GM12878 (cell line): ENCODE measurements at regions of chr1 and their contacts with region 1.

Region 1: DNA sequence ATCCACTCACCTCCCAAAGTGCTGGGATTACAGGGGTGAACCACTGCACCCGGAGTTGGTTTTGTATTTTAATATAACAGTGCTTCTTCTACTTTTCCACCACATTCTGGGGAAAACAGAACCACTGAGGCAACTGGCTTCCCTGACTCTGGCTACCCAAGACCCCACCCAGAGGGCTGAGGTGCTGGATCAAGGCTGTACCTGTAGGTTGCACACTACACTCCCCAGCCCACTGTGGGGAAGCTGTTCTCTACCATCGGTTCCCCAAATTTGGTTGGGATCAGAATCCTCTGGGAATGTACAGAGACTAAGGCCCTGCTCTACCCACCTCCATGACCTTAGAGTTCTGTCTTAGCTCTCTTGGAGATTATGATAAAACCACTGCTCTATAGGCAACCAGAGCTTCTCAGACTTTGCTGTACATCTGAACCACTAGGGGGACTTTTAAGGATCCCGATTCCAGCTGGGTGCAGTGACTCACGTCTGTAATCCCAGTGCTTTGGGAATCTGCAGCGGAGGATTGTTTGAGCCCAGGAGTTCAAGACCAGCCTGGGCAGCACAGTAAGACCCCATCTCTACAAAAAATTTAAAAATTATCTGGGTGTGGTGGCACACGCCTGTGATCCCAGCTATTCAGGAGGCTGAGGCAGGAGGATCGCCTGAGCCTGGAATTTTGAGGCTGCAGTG is 51.6 kb downstream of the GNG4 start:
- DNase-seq: no peak
- ATAC-seq: peak; percentile 42; the same call in 2 of the 3 replicates
- H3K4me3 ChIP-seq: no peak overlapping the region
- H3K27ac ChIP-seq: no peak overlapping the region
- H3K4me1 ChIP-seq: no peaks in the 10 kb centered on the region
- H3K27me3 ChIP-seq: no peaks in the 10 kb centered on the region
- CTCF ChIP-seq: peak; percentile 13 to 41 (median 35); a peak in 5 of 6 replicates
- EP300 ChIP-seq: no peak
- POLR2A ChIP-seq: no peak
- RAD21 ChIP-seq: no peak

Region 2: GRCh38 chr1:235404195-235404594 is 193.8 kb before region 1 on chr1:
- CTCF ChIA-PET with region 1: no interaction called
- POLR2A ChIA-PET with region 1: no interaction called
- RAD21 ChIA-PET with region 1: no interaction called
- SMC1A ChIA-PET with region 1: no interaction called
- in situ Hi-C with region 1: no loop called
- intact Hi-C with region 1: no loop called
- DNase-seq: no peak
- ATAC-seq: no peak
- H3K4me3 ChIP-seq: no peak overlapping the region
- H3K27ac ChIP-seq: no peak overlapping the region
- H3K4me1 ChIP-seq: no peaks in the 10 kb centered on the region
- H3K27me3 ChIP-seq: no peaks in the 10 kb centered on the region
- CTCF ChIP-seq: no peak
- EP300 ChIP-seq: no peak
- POLR2A ChIP-seq: no peak
- RAD21 ChIP-seq: no peak

Region 3: DNA sequence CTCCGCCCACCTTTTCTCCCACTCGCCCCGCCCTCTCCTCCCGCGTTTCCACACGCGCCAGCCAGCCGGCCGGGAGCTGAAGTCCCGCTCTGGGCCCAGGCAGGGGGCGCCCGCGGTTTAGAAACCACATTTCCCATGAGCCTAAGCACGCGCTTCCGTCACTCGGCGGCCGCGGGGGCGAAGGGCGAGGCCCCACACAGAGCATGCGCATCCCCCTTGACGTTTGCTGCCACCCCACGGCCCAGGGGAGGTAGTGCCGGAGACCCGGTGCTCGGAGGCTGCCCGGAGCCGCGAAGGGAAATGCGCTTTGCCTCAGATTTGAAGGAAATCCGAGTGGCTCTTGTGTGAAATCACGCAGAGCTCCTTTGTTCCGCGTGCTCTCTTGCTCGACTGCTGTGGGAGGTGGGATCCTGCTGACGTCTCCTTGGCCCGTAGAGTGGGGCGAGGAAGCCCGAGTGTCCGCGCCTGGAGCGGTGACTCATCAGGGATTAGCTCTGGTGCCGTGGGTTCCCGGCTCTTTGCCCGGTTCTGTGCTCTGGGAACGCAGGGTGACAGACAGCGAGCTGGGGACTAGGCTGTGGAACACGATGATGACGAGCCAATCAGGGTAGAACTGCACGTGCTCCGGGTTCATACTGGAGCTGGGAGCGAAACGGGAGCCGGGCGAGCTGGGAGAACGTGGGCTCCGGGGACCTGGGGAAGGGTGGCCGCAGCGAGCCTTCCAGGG is 93.4 kb before region 1 on chr1:
- CTCF ChIA-PET with region 1: interaction called, 11 read pairs
- POLR2A ChIA-PET with region 1: no interaction called
- RAD21 ChIA-PET with region 1: no interaction called
- SMC1A ChIA-PET with region 1: no interaction called
- in situ Hi-C with region 1: no loop called
- intact Hi-C with region 1: no loop called
- DNase-seq: peak; percentile 96
- ATAC-seq: peak; percentile 86
- H3K4me3 ChIP-seq: peak overlapping the region; percentile 92
- H3K27ac ChIP-seq: peak overlapping the region; percentile 95
- H3K4me1 ChIP-seq: peaks cover 6% of the 10 kb centered on the region
- H3K27me3 ChIP-seq: no peaks in the 10 kb centered on the region
- CTCF ChIP-seq: peak; percentile 82 to 91 (median 86)
- EP300 ChIP-seq: peak in 1 of 2 experiments; percentile 51; a peak in 1 of 4 replicates
- POLR2A ChIP-seq: peak; percentile 86
- RAD21 ChIP-seq: peak; percentile 48; the same call in 1 of the 2 replicates

Region 4: DNA sequence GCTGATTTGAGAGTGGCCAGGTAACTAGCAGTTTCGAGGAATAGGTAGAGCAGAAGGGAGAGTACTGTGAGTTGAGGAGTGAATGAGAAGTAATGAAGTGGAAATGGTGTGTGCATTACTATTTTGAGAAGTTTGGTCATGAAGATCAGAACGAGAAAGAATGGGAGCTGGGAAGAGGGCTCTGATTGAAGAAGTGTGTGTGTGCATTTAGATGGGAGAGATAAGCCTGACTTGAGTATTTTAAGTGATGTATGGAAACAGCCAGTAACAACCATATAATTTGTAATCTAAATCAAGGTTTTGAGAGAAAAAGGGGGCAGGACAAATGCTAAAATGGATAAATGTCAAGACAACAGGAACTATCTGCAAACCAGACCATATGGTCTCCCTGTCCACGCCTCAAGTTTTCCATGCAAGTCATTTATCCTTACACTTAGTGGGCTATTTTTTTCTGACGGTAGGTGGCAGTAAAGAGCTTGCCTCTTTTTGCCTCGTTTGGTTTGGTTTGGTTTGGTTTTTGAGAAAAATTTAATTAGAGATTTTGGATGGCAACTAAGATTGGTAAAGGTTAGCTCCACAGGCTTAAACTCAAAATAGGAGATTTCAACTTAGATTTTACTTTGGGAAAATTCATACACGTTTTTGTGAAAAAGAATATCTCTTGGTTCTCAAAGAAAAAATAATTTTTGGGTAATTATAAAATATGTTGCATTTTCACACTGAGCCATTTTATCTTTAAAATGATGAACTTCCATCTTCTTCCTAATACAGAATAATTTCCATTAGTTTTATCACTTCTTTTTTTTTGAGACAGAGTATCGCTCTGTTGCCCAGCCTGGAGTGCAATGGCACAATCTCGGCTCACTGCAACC is 84.3 kb before region 1 on chr1:
- CTCF ChIA-PET with region 1: interaction called, 13 read pairs
- POLR2A ChIA-PET with region 1: no interaction called
- RAD21 ChIA-PET with region 1: no interaction called
- SMC1A ChIA-PET with region 1: interaction called, 3 read pairs
- in situ Hi-C with region 1: no loop called
- intact Hi-C with region 1: loop called (anchors 5 kb)
- DNase-seq: no peak
- ATAC-seq: peak; percentile 70
- H3K4me3 ChIP-seq: no peak overlapping the region
- H3K27ac ChIP-seq: no peak overlapping the region
- H3K4me1 ChIP-seq: no peaks in the 10 kb centered on the region; the same call in 1 of the 2 replicates
- H3K27me3 ChIP-seq: no peaks in the 10 kb centered on the region
- CTCF ChIP-seq: peak; percentile 79 to 93 (median 82)
- EP300 ChIP-seq: no peak
- POLR2A ChIP-seq: no peak
- RAD21 ChIP-seq: peak; percentile 94

Region 5: GRCh38 chr1:235614442-235614954 is 16.5 kb after region 1 on chr1:
- CTCF ChIA-PET with region 1: interaction called, 26 read pairs
- POLR2A ChIA-PET with region 1: no interaction called
- RAD21 ChIA-PET with region 1: no interaction called
- SMC1A ChIA-PET with region 1: interaction called, 6 read pairs
- in situ Hi-C with region 1: no loop called
- intact Hi-C with region 1: no loop called
- DNase-seq: no peak
- ATAC-seq: no peak
- H3K4me3 ChIP-seq: no peak overlapping the region
- H3K27ac ChIP-seq: no peak overlapping the region
- H3K4me1 ChIP-seq: no peaks in the 10 kb centered on the region
- H3K27me3 ChIP-seq: peaks cover 0 to 3% of the 10 kb centered on the region in 2 experiments; a peak in 1 of 4 replicates
- CTCF ChIP-seq: no peak
- EP300 ChIP-seq: no peak
- POLR2A ChIP-seq: no peak
- RAD21 ChIP-seq: no peak